BJ (cell line): ENCODE measurements at regions of chr2 and their contacts with region 1.

Region 1: GRCh38 chr2:112749755-112750559 is 14.5 kb downstream of the CKAP2L start:
- DNase-seq: no peak
- H3K4me3 ChIP-seq: no peak overlapping the region; the same call in 1 of the 2 replicates
- H3K27me3 ChIP-seq: no peaks in the 10 kb centered on the region
- CTCF ChIP-seq: peak; percentile 99

Region 2: DNA sequence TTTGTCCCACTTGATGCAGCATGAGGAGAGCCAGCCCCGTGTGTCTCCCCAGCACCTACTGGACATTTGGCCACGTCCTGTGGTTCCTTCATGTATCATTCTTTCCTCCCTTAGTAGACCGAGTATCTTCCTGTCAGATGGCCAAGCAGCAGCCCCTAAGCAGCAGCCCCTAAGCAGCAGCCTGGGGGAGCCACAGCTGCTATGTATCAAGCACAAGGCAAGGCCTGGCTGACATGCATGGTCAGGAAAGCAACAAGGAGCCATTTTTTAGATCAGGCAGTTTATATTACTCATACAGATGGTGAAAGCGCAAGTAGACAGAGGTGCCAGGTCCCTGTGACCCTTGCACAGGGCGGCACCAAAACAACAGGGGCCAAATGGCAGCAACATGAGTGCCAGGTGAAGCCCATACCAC is 143.5 kb before region 1 on chr2:
- CTCF ChIA-PET with region 1: no interaction called
- POLR2A ChIA-PET with region 1: no interaction called
- DNase-seq: no peak
- H3K4me3 ChIP-seq: no peak overlapping the region
- H3K27me3 ChIP-seq: no peaks in the 10 kb centered on the region
- CTCF ChIP-seq: no peak

Region 3: DNA sequence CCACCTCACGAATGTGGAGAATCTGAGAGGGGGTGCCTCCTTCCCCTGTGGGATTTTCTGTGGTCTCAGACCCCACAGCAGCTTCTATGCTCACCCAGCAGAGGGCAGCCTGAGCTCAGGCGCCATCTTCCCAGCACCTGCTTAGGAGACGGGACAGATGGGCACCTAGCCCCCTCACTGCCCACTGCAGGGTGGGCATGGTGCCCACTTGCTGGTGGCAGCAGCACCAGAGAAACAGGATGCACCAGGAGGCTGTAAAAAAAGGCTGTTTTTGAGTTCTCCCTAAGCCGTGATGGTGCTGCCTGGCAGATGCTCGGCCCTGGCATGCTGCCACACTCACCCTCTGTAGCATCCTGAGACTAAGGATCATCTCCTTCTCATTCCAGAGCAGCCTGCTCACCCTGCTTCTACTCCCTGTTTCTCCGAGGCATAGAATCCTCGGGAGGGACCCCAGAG is 123.3 kb before region 1 on chr2:
- CTCF ChIA-PET with region 1: interaction called, 11 read pairs
- POLR2A ChIA-PET with region 1: no interaction called
- DNase-seq: peak; percentile 19
- H3K4me3 ChIP-seq: no peak overlapping the region
- H3K27me3 ChIP-seq: no peaks in the 10 kb centered on the region
- CTCF ChIP-seq: peak; percentile 96

Region 4: DNA sequence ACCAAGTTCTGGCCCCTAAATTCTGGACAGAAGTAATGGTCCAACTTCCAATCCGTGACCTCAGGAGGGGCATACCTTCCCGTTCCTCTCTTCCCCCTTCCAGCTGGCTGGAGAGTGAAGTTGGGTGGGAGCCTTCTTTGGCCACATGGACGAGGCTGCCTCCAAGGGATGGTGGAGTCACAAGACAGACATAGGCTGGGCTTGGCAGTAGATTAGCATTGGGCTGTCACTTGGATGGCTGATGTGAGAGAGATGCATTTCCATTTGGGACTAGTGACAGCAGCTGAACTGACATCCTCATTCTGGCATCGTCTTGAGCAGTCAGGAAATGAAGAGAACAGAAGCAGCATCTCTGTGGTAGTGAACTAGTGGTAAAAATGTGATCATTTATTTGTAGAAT is 16.5 kb before region 1 on chr2:
- CTCF ChIA-PET with region 1: interaction called, 18 read pairs
- POLR2A ChIA-PET with region 1: no interaction called
- DNase-seq: no peak
- H3K4me3 ChIP-seq: no peak overlapping the region
- H3K27me3 ChIP-seq: no peaks in the 10 kb centered on the region
- CTCF ChIP-seq: no peak

Region 5: GRCh38 chr2:112829101-112829960 is 79.4 kb after region 1 on chr2:
- CTCF ChIA-PET with region 1: no interaction called
- POLR2A ChIA-PET with region 1: interaction called, 14 read pairs
- DNase-seq: no peak
- H3K4me3 ChIP-seq: no peak overlapping the region
- H3K27me3 ChIP-seq: no peaks in the 10 kb centered on the region
- CTCF ChIP-seq: no peak

Region 6: DNA sequence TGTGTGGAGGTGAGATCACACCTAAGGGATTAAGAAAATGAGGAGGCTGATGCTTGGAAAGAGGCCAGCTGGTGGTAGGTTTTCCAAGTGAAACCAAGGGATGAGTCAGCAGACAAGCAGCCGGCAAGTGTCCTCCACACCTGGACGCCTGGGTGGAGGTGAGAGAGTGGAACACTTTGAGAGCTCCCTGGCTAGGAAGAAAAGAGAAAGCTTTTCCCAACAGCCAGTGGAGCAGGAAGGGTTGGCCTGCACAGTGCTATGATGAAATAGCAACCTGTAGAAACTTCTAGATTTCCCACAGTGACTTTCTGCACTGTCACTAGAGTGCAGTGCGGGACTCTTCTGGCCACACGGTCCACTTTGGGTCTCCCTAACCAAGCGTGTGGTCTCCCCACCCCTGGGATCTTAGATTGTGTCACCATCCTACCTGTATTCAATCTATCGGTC is 141.5 kb after region 1 on chr2:
- CTCF ChIA-PET with region 1: interaction called, 38 read pairs
- POLR2A ChIA-PET with region 1: no interaction called
- DNase-seq: no peak
- H3K4me3 ChIP-seq: no peak overlapping the region
- H3K27me3 ChIP-seq: no peaks in the 10 kb centered on the region
- CTCF ChIP-seq: no peak